AG04450 (cell line): ENCODE measurements at regions of chr4 and their contacts with region 1.

Region 1: GRCh38 chr4:139651282-139652194 is 14.1 kb upstream of the MGST2 start:
- DNase-seq: peak; percentile 77
- H3K4me3 ChIP-seq: no peak overlapping the region
- H3K27ac ChIP-seq: no peak overlapping the region
- H3K27me3 ChIP-seq: no peaks in the 10 kb centered on the region
- CTCF ChIP-seq: peak; percentile 92

Region 2: GRCh38 chr4:139331185-139331584 is 320.4 kb before region 1 on chr4:
- CTCF ChIA-PET with region 1: no interaction called
- POLR2A ChIA-PET with region 1: no interaction called
- DNase-seq: no peak
- H3K4me3 ChIP-seq: no peak overlapping the region
- H3K27ac ChIP-seq: no peak overlapping the region
- H3K27me3 ChIP-seq: no peaks in the 10 kb centered on the region
- CTCF ChIP-seq: no peak

Region 3: DNA sequence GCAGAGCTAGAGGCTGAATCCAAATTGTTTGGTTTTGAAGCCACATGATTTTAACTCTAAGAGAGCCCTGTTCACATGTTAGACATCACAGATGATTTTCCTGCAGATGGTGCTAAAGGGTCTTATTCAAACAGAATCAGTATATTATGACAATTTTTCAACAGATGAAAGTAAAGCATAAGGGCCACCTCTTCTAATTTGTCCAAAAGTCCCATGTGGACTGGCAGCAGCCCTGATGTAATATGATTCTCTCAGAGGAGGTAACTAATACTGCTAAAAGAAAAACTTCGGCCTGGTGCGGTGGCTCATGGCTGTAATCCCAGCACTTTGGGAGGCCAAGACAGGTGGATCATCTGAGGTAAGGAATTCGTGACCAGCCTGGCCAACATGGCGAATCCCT is 69.5 kb before region 1 on chr4:
- CTCF ChIA-PET with region 1: interaction called, 53 read pairs
- POLR2A ChIA-PET with region 1: no interaction called
- DNase-seq: no peak
- H3K4me3 ChIP-seq: no peak overlapping the region
- H3K27ac ChIP-seq: no peak overlapping the region
- H3K27me3 ChIP-seq: peaks cover 16% of the 10 kb centered on the region
- CTCF ChIP-seq: peak; percentile 27; the same call in 1 of the 2 replicates

Region 4: GRCh38 chr4:140000232-140000631 is 348.7 kb after region 1 on chr4:
- CTCF ChIA-PET with region 1: no interaction called
- POLR2A ChIA-PET with region 1: no interaction called
- DNase-seq: no peak
- H3K4me3 ChIP-seq: no peak overlapping the region
- H3K27ac ChIP-seq: no peak overlapping the region
- H3K27me3 ChIP-seq: no peaks in the 10 kb centered on the region
- CTCF ChIP-seq: no peak